HCT116 (cell line): ENCODE measurements at regions of chr3 and their contacts with region 1.

Region 1: GRCh38 chr3:185931777-185932612 is 5.8 kb downstream of the TRA2B start:
- DNase-seq: no peak
- ATAC-seq: no peak
- H3K4me3 ChIP-seq: no peak overlapping the region
- H3K27ac ChIP-seq: no peak overlapping the region
- H3K4me1 ChIP-seq: peaks cover 27 to 68% of the 10 kb centered on the region in 2 experiments; a peak in 3 of 4 replicates
- H3K27me3 ChIP-seq: no peaks in the 10 kb centered on the region
- CTCF ChIP-seq: no peak
- POLR2A ChIP-seq: no peak
- RAD21 ChIP-seq: no peak

Region 2: DNA sequence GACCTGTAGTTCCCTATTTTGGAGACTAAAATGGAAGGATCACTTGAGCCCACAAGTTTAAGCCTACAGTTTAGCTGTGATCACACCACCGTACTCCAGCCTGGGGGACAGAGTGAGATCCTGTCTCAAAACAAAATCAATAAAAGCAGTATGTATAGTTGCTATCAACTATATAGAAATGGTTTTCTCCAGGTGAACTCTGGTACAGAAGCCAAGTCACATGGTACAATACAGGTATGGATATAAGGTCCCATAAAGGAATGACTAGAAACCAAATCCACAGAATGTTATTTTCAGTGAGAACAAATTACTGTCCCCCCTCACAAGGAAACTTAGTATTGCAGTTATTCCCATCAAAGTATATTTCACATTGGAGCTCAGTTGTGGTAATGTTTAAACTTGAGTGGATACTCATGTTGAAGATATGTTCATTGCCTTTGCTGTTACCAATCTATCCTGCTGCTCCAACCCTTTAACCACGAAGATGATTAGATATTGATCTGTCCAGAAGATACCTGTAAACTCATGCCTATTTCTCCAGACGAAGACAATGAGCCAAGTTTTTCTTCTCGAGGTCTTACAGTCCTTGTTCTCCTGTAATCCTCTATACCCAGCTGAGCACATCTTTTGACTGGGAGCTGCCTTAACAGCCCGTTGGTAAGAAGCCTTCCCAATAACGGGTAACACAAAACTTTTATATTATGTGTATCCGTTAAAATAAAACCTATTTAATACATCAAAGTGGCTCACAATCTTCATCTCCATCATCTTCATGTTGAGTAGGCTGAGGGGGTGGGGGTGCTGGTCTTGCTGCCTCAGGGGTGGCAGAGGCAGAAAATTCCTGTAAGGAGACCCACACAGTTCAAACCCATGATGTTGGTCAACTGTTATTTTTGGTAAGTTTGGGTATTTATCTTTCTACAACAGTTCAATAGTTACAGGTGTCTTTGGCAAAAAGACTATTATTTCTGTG is 18.8 kb before region 1 on chr3:
- CTCF ChIA-PET with region 1: no interaction called
- POLR2A ChIA-PET with region 1: interaction called, 7 read pairs
- RAD21 ChIA-PET with region 1: no interaction called
- intact Hi-C with region 1: loop called (anchors 2 kb)
- DNase-seq: no peak
- ATAC-seq: peak; percentile 8; the same call in 1 of the 2 replicates
- H3K4me3 ChIP-seq: no peak overlapping the region
- H3K27ac ChIP-seq: no peak overlapping the region
- H3K4me1 ChIP-seq: peaks cover 0 to 3% of the 10 kb centered on the region in 2 experiments; a peak in 1 of 4 replicates
- H3K27me3 ChIP-seq: no peaks in the 10 kb centered on the region
- CTCF ChIP-seq: no peak
- POLR2A ChIP-seq: no peak
- RAD21 ChIP-seq: no peak